Heart right ventricle (tissue), 16 donors: ENCODE measurements at regions of chr16 and their contacts with region 1.

Region 1: GRCh38 chr16:79429381-79430190 is 171.0 kb downstream of the MAF start:
- DNase-seq: no peak
- ATAC-seq: peak in 6 of 8 donors; percentile 27 to 55 (median 46)
- H3K4me3 ChIP-seq: no peak overlapping the region
- H3K27ac ChIP-seq: no peak overlapping the region
- H3K4me1 ChIP-seq: peaks cover 0 to 17% (median 6%) of the 10 kb centered on the region in 9 donors
- H3K27me3 ChIP-seq: peaks cover 0 to 4% (median 0%) of the 10 kb centered on the region in 7 donors
- CTCF ChIP-seq: no peak

Region 2: GRCh38 chr16:79381552-79382042 is 48.0 kb before region 1 on chr16:
- intact Hi-C with region 1: no loop called
- DNase-seq: no peak
- ATAC-seq: peak in 3 of 8 donors; percentile 35 to 57 (median 38)
- H3K4me3 ChIP-seq: no peak overlapping the region
- H3K27ac ChIP-seq: peak overlapping the region in 1 of 10 donors; percentile 65
- H3K4me1 ChIP-seq: peaks cover 0 to 21% (median 0%) of the 10 kb centered on the region in 9 donors
- H3K27me3 ChIP-seq: peaks cover 0 to 9% (median 0%) of the 10 kb centered on the region in 7 donors
- CTCF ChIP-seq: no peak

Region 3: DNA sequence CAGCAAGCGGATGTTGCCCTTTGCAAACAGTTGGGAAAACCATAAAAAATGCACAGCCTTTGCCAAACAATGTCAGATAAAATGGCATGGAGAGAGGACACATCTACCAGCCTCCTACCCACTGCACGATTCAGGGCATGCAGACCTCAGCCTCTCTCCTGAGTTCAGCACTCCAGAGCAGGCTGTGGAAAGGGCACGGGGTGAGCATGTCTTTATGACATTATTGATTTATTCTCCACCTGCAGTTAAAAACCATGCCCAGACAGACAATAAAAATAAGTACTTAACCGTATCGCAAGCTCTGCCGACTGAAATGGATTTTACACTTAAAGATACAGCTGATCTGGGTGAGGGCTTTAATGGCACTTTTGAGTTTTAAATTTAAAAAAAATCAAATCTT is 43.9 kb after region 1 on chr16:
- intact Hi-C with region 1: loop called in 1 of 10 experiments (anchors 1 kb)
- DNase-seq: no peak
- ATAC-seq: no peak
- H3K4me3 ChIP-seq: no peak overlapping the region
- H3K27ac ChIP-seq: no peak overlapping the region
- H3K4me1 ChIP-seq: peaks cover 0 to 4% (median 0%) of the 10 kb centered on the region in 9 donors
- H3K27me3 ChIP-seq: no peaks in the 10 kb centered on the region
- CTCF ChIP-seq: no peak

Region 4: DNA sequence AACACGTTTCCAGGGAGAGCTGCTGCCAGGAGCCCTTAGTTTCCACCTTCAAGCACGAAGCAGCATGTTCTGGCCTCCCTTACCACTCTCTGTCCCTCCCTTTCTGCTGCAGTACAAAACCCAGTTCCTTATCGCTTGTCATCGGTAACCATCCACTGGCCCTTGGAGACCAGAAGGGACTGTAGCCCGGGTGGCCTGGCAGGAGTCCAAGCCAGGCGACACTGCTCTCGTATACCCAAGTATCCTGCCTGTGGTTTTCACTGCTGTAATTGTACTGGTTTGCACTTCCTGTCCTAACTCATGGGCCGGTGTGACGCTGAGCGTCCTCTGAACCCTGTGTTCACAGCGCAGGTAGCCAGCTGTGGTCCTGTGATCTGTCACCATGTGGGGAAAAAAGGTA is 89.9 kb after region 1 on chr16:
- intact Hi-C with region 1: no loop called
- DNase-seq: peak in 1 of 2 donors; percentile 53
- ATAC-seq: peak in 5 of 8 donors; percentile 38 to 63 (median 48)
- H3K4me3 ChIP-seq: no peak overlapping the region
- H3K27ac ChIP-seq: no peak overlapping the region
- H3K4me1 ChIP-seq: peaks cover 0 to 12% (median 4%) of the 10 kb centered on the region in 9 donors
- H3K27me3 ChIP-seq: peaks cover 0 to 21% (median 10%) of the 10 kb centered on the region in 7 donors
- CTCF ChIP-seq: no peak